Common myeloid progenitor, CD34-positive (primary cell): ENCODE measurements at regions of chr1 and their contacts with region 1.

Region 1: GRCh38 chr1:167066333-167067122 is 23.6 kb downstream of the GPA33 start:
- DNase-seq: peak; percentile 59 to 68 (median 67)
- H3K4me3 ChIP-seq: peak overlapping the region in 4 of 7 experiments; percentile 39 to 70 (median 54)
- H3K27ac ChIP-seq: no peak overlapping the region
- H3K4me1 ChIP-seq: peaks cover 0 to 5% (median 1%) of the 10 kb centered on the region in 4 experiments
- H3K27me3 ChIP-seq: no peaks in the 10 kb centered on the region

Region 2: GRCh38 chr1:166695115-166695514 is 371.4 kb before region 1 on chr1:
- CTCF ChIA-PET with region 1: no interaction called
- POLR2A ChIA-PET with region 1: no interaction called
- DNase-seq: no peak
- H3K4me3 ChIP-seq: no peak overlapping the region
- H3K27ac ChIP-seq: no peak overlapping the region
- H3K4me1 ChIP-seq: peaks cover 0 to 4% (median 0%) of the 10 kb centered on the region in 4 experiments
- H3K27me3 ChIP-seq: no peaks in the 10 kb centered on the region

Region 3: DNA sequence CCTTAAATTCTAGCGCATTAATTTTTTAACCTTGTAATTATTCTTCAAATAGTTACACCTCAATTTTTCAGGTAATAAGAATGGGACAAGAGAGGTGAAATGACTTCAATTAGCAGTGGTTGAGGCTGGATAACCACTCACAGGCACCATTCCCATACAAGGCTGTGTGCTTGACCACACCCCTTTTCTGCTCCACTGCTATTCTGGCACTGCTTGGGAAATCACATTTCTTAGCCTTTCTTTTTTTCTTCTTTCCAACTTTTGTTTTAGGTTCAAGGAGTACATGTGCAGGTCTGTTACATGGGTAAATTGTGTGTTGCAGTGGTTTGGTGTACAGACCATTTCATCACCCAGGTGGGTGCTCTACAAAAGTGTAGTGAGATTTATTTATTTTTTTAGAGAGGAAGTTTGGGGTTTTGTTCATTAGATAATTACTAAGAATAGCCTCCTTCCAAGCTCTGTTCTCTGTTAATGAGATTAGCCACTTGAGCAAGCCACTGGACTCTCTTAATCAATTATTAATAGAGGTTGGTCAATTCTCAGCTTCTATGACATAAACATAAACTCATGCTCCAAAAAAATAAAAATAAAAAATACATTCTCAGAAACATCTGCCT is 105.6 kb before region 1 on chr1:
- CTCF ChIA-PET with region 1: no interaction called
- POLR2A ChIA-PET with region 1: no interaction called
- DNase-seq: no peak
- H3K4me3 ChIP-seq: no peak overlapping the region
- H3K27ac ChIP-seq: no peak overlapping the region
- H3K4me1 ChIP-seq: no peaks in the 10 kb centered on the region
- H3K27me3 ChIP-seq: peaks cover 0 to 3% (median 0%) of the 10 kb centered on the region in 5 experiments

Region 4: DNA sequence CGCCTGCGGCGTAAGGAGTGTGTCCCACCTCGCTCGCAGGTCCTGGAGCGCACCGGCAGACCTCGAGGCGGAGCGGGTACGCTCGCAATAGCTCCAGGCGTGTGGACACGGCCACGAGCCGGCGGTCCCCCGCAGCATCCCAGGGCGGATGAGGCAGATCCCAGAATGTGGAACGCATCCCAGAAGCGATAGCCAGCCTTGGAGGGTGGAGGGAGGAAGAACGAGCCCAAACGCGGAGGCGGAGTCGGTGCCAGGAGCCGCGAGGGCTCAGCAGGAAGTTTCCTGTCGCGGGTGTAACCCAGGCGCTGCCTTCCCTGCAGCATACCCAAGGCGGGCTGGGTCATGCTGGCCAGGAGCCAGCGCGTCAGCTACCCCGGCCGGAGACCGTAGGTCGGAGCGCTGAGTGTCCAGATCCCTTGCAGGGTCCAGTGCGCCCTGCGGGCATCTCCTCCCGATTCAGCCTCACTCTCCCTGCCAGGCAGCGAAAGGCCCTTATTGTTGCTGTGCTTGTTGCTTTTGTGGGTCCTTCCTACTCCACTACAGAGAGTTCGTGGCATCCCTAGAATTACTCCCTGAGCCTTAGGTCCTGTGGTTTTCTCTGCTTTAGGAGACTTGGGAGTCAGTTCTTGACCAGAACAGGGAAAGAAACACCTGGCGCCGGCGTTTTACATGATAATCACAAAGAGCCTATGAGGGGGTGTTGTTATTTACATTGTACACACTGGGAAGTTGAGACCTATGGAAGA is 55.0 kb after region 1 on chr1:
- CTCF ChIA-PET with region 1: interaction called, 136 read pairs
- POLR2A ChIA-PET with region 1: no interaction called
- DNase-seq: peak; percentile 47 to 67 (median 59)
- H3K4me3 ChIP-seq: peak overlapping the region in 6 of 7 experiments; percentile 15 to 86 (median 68)
- H3K27ac ChIP-seq: no peak overlapping the region
- H3K4me1 ChIP-seq: peaks cover 0 to 11% (median 5%) of the 10 kb centered on the region in 4 experiments
- H3K27me3 ChIP-seq: no peaks in the 10 kb centered on the region

Region 5: DNA sequence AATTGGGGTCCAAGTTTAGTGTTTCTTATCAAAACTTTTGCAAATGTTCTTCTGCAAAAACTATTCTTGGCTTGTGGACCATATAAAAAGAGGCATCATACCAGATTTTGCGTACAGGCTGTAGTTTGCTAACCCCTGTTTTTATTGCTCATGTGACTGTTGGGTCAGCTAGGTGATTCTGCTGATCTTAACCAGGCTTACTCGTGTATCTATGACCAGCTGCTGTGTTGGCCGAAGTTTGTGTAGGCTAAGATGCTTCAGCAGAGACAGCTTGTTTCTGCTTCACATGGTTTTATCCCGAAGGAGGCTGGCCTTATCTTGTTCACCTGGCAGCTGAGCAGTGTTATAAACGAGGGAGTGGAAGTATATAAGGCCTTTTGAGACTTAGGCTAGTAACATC is 192.3 kb after region 1 on chr1:
- CTCF ChIA-PET with region 1: no interaction called
- POLR2A ChIA-PET with region 1: no interaction called
- DNase-seq: no peak
- H3K4me3 ChIP-seq: no peak overlapping the region
- H3K27ac ChIP-seq: no peak overlapping the region
- H3K4me1 ChIP-seq: peaks cover 10 to 20% (median 12%) of the 10 kb centered on the region in 4 experiments
- H3K27me3 ChIP-seq: no peaks in the 10 kb centered on the region